ENCODE measurements at regions of chr5 and their contacts with region 1.

Region 1: DNA sequence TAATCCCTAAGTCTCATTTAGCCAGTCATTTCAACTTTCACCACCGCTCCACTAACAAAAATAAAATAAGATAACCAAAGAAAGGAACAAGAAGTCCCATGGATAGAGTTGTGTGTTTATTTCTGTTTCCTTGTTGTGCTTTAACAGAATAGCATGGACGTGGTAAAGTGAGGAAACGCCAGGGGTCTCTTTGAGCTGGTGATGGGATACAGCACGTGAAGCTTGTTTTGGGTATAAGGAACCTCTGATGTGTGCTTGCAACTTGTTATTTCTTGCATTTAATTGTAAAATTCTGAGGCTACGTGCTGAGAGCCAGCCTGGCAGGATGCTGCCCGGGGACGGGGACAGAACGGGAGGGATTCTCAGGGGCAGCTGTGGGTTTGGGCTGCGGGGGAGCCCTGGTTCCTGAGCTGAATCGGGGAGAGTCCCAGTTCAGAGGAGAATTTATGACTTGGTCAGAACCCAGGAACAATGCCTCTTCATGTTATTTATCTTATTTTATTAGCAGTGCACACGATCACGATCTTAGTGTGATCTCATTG is 63.4 kb downstream of the ANKRD33B start:
- DNase-seq: no peak
- H3K4me3 ChIP-seq: peak overlapping the region; percentile 7 to 50 (median 22)
- H3K27ac ChIP-seq: peak overlapping the region; percentile 50
- H3K4me1 ChIP-seq: peaks cover 6% of the 10 kb centered on the region
- H3K27me3 ChIP-seq: no peaks in the 10 kb centered on the region
- CTCF ChIP-seq: no peak
- POLR2A ChIP-seq: no peak

Region 2: DNA sequence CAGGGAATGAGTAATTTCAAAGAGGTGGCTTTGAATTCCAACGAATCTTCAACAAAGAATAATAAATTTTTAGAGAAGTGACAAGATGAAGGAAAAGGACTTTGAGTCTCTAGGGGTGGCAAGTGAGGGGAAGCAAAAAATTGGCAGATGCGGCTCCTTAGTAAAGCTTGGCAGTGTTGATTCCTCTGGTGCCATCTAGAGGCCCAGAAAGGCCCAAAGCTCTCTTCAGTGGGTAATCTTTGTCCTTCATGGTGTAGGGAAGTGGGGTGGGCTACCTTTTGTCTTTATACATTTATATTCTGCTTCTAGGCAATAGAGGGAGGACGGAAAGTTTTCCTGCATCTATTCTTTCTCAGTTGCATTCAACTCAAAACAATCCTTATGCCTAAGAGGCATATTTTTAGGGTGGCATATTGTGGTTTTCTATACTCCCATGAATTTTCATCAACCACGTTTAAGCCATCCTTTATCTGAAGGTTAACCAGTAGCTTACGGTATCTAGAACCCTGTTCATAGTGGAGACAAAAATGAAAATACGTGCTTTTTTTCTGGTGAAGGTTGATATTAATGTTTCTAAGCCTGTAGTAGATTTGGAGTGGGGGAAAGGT is 203.0 kb before region 1 on chr5:
- CTCF ChIA-PET with region 1: interaction called, 13 read pairs
- POLR2A ChIA-PET with region 1: no interaction called
- dilution Hi-C with region 1: no loop called
- intact Hi-C with region 1: no loop called
- DNase-seq: peak; percentile 42
- H3K4me3 ChIP-seq: no peak overlapping the region
- H3K27ac ChIP-seq: no peak overlapping the region
- H3K4me1 ChIP-seq: peaks cover 29% of the 10 kb centered on the region
- H3K27me3 ChIP-seq: no peaks in the 10 kb centered on the region
- CTCF ChIP-seq: peak; percentile 40 to 68
- POLR2A ChIP-seq: no peak

Region 3: GRCh38 chr5:10467240-10468198 is 159.7 kb before region 1 on chr5:
- CTCF ChIA-PET with region 1: interaction called, 16 read pairs
- POLR2A ChIA-PET with region 1: no interaction called
- dilution Hi-C with region 1: no loop called
- intact Hi-C with region 1: no loop called
- DNase-seq: peak; percentile 80
- H3K4me3 ChIP-seq: peak overlapping the region in 1 of 3 experiments; percentile 23
- H3K27ac ChIP-seq: peak overlapping the region; percentile 66
- H3K4me1 ChIP-seq: peaks cover 17% of the 10 kb centered on the region
- H3K27me3 ChIP-seq: no peaks in the 10 kb centered on the region
- CTCF ChIP-seq: no peak
- POLR2A ChIP-seq: no peak

Region 4: DNA sequence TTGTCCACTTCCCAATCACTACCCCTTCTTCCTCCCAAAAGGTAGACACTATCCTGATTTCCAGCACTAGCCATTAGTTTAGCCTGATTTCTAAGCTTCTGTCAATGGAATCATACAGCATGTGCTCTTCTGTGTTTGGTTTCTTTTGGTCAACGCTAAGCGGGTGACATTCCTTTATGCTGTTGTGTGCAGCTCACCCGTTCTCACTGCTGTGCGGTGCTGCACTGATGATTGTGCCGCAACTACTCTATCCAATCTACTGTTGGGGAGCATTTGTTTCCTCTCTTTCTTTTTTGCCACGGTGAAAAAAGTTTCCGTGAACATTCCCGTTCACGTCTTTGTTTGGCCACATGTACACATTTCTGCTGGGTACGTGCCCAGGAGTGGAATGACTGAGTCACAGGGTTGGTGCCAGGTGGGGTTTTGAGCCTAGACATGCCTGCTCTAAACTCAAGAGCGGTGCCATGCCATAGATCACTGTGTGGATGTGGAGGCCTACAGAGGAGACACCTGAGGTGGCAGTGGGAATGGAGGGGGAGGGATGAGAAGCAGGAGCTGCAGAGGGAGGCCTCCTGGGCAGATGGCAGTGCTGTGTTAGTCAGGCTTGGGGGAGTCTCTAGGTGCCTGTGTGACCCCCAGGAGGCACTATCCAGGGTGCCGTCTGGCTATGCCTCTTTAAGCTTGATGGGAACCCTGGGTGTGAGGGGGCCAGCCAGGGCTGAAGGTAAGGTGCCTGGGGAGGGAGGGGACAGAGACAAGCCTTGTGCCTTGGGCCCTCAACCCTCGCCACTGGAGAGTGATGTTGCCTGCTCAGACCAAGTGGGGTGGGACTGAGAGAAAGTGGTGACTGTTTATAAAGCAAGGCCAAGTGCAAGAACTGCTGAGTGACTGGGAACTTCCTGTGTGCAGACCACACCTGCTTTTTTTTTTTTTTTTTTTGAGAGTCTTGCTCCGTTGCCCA is 74.8 kb before region 1 on chr5:
- CTCF ChIA-PET with region 1: interaction called, 27 read pairs
- POLR2A ChIA-PET with region 1: no interaction called
- dilution Hi-C with region 1: no loop called
- intact Hi-C with region 1: no loop called
- DNase-seq: peak; percentile 44
- H3K4me3 ChIP-seq: no peak overlapping the region
- H3K27ac ChIP-seq: peak overlapping the region; percentile 87
- H3K4me1 ChIP-seq: peaks cover 33% of the 10 kb centered on the region
- H3K27me3 ChIP-seq: no peaks in the 10 kb centered on the region
- CTCF ChIP-seq: no peak
- POLR2A ChIP-seq: no peak

Region 5: DNA sequence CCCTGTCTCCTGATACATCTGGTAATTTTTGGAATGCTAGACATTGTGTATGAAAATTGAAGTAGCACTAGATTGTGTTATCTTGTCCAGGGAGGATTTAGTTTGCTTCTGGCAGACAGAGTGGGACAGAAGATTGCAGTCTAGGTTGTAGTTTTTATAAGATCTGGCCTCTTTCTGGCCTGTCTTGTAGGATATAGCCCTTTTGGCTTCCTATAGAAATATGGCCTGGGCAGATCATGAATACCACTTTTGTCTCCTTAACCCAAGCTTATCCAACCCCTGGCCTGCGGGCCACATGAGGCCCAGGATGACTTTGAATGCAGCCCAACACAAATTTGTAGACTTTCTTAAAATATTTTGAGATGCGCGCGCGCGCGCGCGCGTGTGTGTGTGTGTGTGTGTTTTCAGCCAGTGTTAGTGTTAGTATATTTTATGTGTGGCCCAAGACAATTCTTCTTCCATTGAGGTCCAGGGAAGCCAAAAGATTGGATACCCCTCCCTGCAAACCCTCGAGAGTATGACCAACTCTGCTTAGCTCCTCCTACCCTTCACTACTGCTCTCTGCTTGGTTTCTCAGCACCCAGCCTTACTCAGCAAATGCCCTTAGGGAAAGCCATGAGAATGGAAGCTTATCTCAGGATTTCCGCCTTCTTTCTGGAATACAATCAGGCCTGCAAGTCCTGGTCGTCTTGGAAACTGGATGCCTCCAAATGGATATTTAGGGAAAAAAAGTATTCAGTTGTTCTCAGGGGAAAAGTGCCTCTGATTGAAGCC is 36.8 kb before region 1 on chr5:
- CTCF ChIA-PET with region 1: interaction called, 19 read pairs
- POLR2A ChIA-PET with region 1: no interaction called
- dilution Hi-C with region 1: no loop called
- intact Hi-C with region 1: no loop called
- DNase-seq: peak; percentile 97
- H3K4me3 ChIP-seq: no peak overlapping the region
- H3K27ac ChIP-seq: peak overlapping the region; percentile 49
- H3K4me1 ChIP-seq: peaks cover 27% of the 10 kb centered on the region
- H3K27me3 ChIP-seq: no peaks in the 10 kb centered on the region
- CTCF ChIP-seq: no peak
- POLR2A ChIP-seq: no peak